ENCODE measurements at regions of chr12 and their contacts with region 1.

Region 1: GRCh38 chr12:575948-576612 is 87.2 kb downstream of the NINJ2 start:
- DNase-seq: peak; percentile 90
- ATAC-seq: peak; percentile 90

Region 2: GRCh38 chr12:642633-643474 is 66.8 kb after region 1 on chr12:
- intact Hi-C with region 1: loop called (anchors 10 kb)
- DNase-seq: peak; percentile 81
- ATAC-seq: peak; percentile 68

Region 3: GRCh38 chr12:751192-751998 is 175.3 kb after region 1 on chr12:
- intact Hi-C with region 1: loop called (anchors 10 kb)
- DNase-seq: peak; percentile 93
- ATAC-seq: peak; percentile 79